Tibial artery (tissue), 4 donors: ENCODE measurements at regions of chr1 and their contacts with region 1.

Region 1: GRCh38 chr1:222455188-222455879 is 92.6 kb downstream of the HHIPL2 start:
- DNase-seq: peak; percentile 81 to 89
- H3K4me3 ChIP-seq: peak overlapping the region; percentile 5 to 35
- H3K27ac ChIP-seq: peak overlapping the region; percentile 42 to 43
- H3K4me1 ChIP-seq: peaks cover 0 to 14% (median 8%) of the 10 kb centered on the region in 4 donors
- H3K27me3 ChIP-seq: no peaks in the 10 kb centered on the region
- CTCF ChIP-seq: peak; percentile 87 to 90

Region 2: DNA sequence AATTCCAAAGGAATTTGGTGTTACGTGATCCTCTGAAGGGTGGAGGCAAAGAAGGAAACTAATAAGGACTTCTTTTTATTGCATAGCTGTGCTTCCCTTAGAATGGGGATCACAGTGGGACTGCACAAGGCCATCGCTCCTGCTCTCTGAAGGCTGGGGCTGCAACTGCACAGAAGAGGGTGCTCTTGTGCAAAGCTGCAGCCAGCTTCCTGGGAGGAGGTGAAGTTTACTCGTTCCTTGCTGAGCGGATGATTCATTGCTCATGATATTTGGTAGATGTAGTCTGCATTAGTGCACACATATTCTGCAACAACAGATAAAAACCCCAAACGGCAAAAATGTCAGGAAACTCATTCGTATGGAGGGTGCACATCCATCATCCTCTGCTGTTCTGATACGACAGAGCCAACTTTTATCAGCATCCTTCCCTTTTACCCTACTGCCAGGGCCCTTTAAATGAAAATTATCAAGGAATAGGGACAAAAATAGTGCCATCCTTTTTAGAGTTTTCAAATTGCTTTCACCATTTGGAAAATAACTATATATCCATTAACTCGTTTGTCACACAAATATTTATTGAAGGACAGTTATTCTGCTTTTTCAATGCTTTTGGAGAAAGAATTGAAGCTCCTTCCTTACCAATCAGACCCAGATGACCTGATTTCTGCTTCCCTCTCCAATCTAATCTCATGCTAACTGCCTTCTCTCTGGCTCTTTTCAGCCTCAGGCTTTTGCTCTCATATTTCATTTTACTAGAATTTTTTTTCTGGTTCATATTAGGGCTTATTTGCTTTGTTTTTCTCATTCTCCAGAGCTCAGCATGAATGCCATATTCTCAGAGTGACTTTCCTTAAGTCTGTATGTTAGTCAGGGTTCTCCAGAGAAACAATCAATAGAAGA is 977.0 kb before region 1 on chr1:
- intact Hi-C with region 1: loop called (anchors 10 kb)
- DNase-seq: peak in 1 of 2 donors; percentile 39
- H3K4me3 ChIP-seq: no peak overlapping the region
- H3K27ac ChIP-seq: no peak overlapping the region
- H3K4me1 ChIP-seq: no peaks in the 10 kb centered on the region
- H3K27me3 ChIP-seq: peaks cover 0 to 3% of the 10 kb centered on the region in 2 donors
- CTCF ChIP-seq: peak; percentile 38 to 62

Region 3: DNA sequence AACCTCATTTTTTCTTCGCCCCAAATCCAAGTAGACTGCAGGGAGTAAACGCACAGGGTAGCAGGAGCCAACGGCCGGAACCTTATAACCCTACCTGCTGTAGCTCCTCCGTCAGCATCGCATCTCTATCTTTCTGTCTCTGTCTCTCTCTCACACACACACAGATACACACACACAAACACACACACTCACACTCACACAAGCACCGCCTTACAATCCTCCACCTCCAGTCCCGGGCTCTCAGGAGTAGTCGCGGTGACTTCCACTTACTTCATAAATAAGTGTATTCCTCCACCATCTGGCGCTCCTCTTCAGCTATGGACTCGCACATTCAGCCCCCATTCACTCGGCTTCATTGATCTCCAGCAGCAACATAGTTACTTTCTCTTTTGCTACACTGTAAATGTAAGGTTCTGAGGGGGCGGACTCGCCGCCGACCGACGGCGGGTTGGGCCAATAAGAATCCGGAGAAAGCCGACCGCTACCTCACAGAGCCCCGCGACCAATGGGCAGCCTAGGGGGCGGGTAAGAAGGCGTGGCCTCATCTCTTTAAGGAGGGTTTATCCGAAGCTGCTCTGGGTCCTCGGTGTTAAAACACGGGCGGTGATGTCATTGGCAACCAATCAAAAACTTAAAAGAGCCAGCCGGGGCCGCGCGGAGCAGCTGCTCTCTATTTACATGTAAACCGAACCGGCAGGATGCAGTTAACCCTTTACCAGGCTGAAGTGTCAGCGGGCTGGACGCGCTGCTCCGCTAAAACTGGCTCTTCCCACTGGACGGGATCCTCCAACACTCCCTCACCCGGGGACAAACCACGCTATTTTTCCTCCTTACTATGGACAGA is 713.4 kb before region 1 on chr1 and contains the start of gene DUSP10:
- intact Hi-C with region 1: loop called (anchors 10 kb)
- DNase-seq: peak; percentile 99 to 100
- H3K4me3 ChIP-seq: peak within 1 kb of the TSS; percentile 80 to 83
- H3K27ac ChIP-seq: peak within 1 kb of the TSS; percentile 93 to 94
- H3K4me1 ChIP-seq: peaks cover 0 to 24% (median 10%) of the 10 kb centered on the region in 4 donors
- H3K27me3 ChIP-seq: no peaks in the 10 kb centered on the region
- CTCF ChIP-seq: no peak

Region 4: GRCh38 chr1:222095606-222096475 is 359.5 kb before region 1 on chr1:
- intact Hi-C with region 1: loop called (anchors 10 kb)
- DNase-seq: peak in 1 of 2 donors; percentile 28
- H3K4me3 ChIP-seq: no peak overlapping the region
- H3K27ac ChIP-seq: no peak overlapping the region
- H3K4me1 ChIP-seq: no peaks in the 10 kb centered on the region
- H3K27me3 ChIP-seq: no peaks in the 10 kb centered on the region
- CTCF ChIP-seq: peak; percentile 44 to 70

Region 5: DNA sequence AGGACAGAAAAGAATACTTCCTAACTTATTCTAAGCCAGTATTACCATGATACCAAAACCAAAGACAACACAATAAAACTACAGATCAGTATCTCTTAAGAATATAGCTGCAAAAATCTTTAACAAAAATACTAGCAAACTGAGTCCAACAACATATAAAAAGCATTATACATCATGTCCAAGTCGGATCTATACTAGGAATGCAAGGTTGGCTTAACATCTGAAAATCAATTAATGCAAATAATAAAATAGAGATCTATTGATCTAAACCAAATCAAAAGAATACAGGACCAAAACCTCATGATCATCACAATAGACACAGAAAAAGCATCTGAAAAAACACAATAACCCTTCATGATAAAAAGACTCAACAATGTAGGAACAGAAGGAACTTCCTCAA is 115.5 kb after region 1 on chr1:
- intact Hi-C with region 1: no loop called
- DNase-seq: no peak
- H3K4me3 ChIP-seq: no peak overlapping the region
- H3K27ac ChIP-seq: no peak overlapping the region
- H3K4me1 ChIP-seq: no peaks in the 10 kb centered on the region
- H3K27me3 ChIP-seq: no peaks in the 10 kb centered on the region
- CTCF ChIP-seq: no peak

Region 6: DNA sequence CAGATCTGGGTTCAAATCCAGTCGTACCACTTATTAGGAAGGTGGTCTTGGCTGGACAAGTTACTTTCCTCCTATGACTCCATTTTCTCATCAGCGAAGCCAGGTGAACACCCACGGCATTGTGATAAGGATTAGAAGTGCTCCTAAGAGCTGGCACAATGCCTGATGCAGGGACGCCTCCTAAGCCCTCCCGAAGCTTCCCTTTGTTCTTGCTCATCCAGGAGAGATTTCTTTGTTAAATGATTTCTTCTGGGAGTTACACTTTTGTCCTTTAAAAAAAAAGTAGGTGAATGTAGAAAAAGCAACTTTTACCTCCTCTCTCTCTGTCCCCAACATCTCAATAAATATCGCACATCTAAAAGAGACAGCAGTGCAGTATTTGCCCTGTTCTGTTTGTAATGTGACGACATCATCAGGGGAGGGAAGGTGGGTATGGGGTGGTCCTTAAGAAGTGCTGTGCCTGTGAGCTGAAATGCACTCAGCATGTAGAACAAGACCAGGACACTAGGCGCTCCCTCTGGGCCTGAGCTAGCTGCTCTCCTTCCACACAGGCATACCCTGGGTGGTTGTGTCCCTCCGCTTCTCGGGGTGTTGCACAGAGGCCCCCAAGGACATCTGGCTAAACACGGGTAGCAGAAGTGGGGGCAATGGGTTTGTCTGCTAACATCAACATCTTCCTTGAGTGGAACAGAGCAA is 864.7 kb after region 1 on chr1:
- intact Hi-C with region 1: no loop called
- DNase-seq: no peak
- H3K4me3 ChIP-seq: no peak overlapping the region
- H3K27ac ChIP-seq: no peak overlapping the region
- H3K4me1 ChIP-seq: no peaks in the 10 kb centered on the region
- H3K27me3 ChIP-seq: no peaks in the 10 kb centered on the region
- CTCF ChIP-seq: no peak